AG04449 (cell line): ENCODE measurements at regions of chr12 and their contacts with region 1.

Region 1: DNA sequence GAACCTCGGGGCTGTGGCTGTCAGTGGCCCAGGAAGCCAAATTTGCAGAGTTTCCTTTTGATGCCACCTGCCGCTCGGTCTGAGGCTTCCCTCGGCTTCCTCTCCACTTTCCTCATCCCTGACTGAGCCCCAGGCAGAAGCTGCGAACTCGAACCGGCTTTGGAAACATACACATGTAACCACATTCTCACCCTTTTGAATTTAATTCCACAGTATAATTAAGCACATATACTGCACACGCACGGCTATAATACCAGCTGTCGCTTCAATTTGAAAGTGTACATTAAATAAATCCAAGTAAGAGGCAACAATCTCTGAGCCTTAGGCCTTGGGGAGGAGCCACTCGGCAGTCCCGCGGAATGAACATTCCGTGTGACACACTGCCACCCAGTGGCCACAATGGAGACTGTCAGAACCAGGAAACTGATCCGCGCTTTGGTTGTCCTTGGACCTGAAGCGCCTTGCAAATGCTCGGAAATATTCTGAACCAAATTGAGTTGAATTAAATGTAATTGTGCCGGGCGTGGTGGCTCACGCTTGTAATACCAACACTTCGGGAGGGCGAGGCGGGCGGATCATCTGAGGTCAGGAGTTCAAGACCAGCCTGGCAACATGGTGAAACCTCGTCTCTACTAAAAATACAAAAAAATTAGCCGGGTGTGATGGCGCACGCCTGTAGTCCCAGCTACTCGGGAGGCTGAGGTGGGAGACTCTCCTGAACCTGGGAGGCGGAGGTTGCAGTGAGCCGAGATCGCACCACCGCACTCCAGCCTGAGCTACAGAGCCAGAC is 117.9 kb upstream of the TMPO start:
- DNase-seq: no peak
- H3K4me3 ChIP-seq: peak overlapping the region; percentile 42
- CTCF ChIP-seq: peak; percentile 88

Region 2: DNA sequence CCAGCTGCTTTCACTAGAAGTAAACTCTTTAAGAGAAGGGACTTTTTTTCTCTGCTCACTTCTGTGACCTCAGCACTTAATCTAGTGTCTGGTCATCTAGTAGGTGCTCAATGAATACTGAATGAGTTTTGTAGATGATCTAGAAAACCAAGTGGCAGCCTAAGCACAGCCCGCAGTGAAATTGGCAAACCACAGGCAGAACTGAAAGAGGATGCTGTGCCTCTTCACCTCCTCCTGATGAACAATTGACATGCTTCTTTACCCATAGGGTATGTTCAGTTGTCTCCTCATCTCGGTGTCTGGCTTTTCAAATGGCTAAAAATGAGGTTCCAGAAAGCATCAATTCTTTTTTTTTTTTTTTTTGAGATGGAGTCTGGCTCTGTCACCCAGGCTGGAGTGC is 535.4 kb before region 1 on chr12:
- CTCF ChIA-PET with region 1: no interaction called
- POLR2A ChIA-PET with region 1: no interaction called
- DNase-seq: no peak
- H3K4me3 ChIP-seq: no peak overlapping the region
- CTCF ChIP-seq: no peak

Region 3: GRCh38 chr12:98374006-98374405 is 23.5 kb before region 1 on chr12:
- CTCF ChIA-PET with region 1: interaction called, 10 read pairs
- POLR2A ChIA-PET with region 1: no interaction called
- DNase-seq: no peak
- H3K4me3 ChIP-seq: no peak overlapping the region
- CTCF ChIP-seq: peak; percentile 10

Region 4: DNA sequence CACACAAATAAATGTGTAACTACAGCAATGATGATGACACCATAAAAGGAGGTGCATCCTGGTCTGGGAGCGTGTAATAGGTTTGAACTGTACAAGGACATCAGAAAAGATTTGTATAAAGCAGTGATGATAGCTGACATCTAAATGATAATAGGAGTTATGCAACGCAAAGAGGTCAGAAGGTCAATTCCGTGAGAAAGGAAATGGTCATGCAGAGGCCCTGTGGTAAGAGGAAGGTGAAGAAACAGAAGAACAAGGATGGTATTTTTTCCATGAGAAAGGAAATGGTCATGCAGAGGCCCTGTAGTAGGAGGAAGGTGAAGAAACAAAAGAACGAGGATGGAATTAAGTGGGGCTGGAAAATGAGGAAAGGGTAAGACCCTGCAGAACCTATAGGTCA is 11.2 kb after region 1 on chr12:
- CTCF ChIA-PET with region 1: interaction called, 11 read pairs
- POLR2A ChIA-PET with region 1: no interaction called
- DNase-seq: no peak
- H3K4me3 ChIP-seq: no peak overlapping the region
- CTCF ChIP-seq: no peak

Region 5: DNA sequence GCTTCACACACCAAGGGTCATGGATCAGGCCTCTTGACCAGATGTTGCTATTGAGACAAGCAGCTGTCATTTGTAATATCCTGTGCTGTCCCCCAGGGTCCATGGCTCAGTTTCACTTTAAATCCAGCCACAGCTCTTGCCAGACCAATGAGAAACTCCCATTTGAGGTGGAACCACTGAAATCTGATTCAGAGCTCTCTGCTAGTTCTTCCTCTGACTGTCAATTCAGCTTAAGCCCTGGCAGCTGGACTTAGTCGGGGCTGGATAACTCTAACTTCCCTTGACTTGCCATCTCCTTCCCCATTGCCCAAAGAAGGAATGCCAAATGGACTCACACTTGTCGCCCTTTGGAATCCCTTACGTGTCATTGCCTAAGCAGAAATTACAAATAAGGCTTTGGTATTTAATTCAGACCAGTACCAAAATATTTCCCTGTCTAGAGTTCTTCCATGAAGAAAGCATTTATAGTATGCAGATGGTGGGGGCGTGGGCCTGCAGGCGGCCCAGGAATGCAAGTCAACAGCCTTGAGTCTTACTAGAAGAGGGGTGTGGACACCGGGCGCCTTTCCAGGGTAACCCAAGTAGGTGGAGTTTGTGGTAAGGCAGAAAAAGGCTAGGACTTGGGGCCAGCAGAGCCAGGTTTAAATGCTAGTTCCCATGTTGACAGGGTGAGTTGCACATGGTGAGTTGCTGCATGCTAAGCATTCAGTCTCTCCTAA is 21.0 kb after region 1 on chr12:
- CTCF ChIA-PET with region 1: interaction called, 13 read pairs
- POLR2A ChIA-PET with region 1: no interaction called
- DNase-seq: peak; percentile 99
- H3K4me3 ChIP-seq: peak overlapping the region; percentile 45
- CTCF ChIP-seq: no peak